ENCODE measurements at regions of chr1 and their contacts with region 1.

Region 1: DNA sequence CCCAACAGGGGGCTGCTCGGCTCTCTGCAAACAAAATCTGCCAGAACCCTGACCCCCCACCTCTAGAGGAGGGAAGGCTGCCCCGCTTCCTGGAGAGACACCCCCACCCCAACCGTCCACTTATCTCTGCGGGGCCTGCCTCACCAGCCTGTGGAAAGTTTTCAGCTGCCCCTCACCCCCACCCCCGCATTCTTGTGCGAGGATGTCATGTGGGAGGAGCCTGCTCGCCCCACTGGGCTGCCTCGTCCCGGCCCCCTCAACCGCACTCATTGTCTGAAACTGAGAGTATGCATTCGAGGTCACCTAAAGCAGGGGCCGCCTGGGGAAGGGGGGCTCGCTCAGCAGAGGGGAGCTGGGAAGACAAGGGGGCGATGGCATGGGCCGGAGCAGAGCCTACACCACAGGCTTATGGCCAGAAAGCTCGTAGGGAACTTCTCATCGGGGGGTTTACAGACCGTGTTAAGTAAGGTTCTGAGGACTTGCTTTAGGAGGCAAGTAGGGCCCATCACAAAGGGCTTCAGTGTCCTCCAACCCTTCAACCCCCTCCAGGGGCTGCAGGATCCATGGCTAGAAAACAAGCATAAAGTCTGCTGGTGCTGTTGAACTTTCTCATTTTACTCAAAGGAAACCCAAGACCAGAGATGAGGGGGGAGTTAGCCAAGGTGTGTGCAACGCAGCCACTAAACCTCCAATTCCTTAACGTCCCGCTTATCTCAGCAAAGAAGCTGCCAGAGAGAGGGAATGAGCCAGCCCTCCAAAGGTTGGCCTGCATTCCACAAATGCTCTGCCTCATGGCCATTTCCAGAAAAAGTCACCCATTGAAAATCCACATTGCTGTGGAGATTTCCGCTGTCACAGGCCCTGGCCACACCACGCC is 9.4 kb downstream of the EPHA2 start:
- DNase-seq: no peak
- ATAC-seq: no peak
- H3K4me3 ChIP-seq: no peak overlapping the region
- H3K4me3 Mint-ChIP-seq: no peak overlapping the region
- H3K27ac ChIP-seq: no peak overlapping the region
- H3K27ac Mint-ChIP-seq: no peak overlapping the region
- H3K4me1 ChIP-seq: peaks cover 14% of the 10 kb centered on the region
- H3K4me1 Mint-ChIP-seq: peaks cover 3% of the 10 kb centered on the region
- H3K27me3 ChIP-seq: peaks cover 2 to 3% of the 10 kb centered on the region in 2 experiments
- H3K27me3 Mint-ChIP-seq: peaks cover 8% of the 10 kb centered on the region
- CTCF ChIP-seq: no peak

Region 2: GRCh38 chr1:14923727-14924452 is 1222.6 kb before region 1 on chr1:
- CTCF ChIA-PET with region 1: no interaction called
- POLR2A ChIA-PET with region 1: no interaction called
- intact Hi-C with region 1: loop called in 1 of 2 experiments (anchors 10 kb)
- DNase-seq: peak in 6 of 9 experiments; percentile 4 to 60 (median 26)
- ATAC-seq: peak; percentile 72
- H3K4me3 ChIP-seq: no peak overlapping the region
- H3K4me3 Mint-ChIP-seq: peak overlapping the region; percentile 76
- H3K27ac ChIP-seq: no peak overlapping the region
- H3K27ac Mint-ChIP-seq: no peak overlapping the region
- H3K4me1 ChIP-seq: peaks cover 6% of the 10 kb centered on the region
- H3K4me1 Mint-ChIP-seq: peaks cover 8% of the 10 kb centered on the region
- H3K27me3 ChIP-seq: peaks cover 10% of the 10 kb centered on the region in 2 experiments
- H3K27me3 Mint-ChIP-seq: peaks cover 36% of the 10 kb centered on the region
- CTCF ChIP-seq: no peak

Region 3: GRCh38 chr1:16116002-16116401 is 30.5 kb before region 1 on chr1:
- CTCF ChIA-PET with region 1: no interaction called
- POLR2A ChIA-PET with region 1: no interaction called
- intact Hi-C with region 1: no loop called
- DNase-seq: no peak
- ATAC-seq: no peak
- H3K4me3 ChIP-seq: no peak overlapping the region
- H3K4me3 Mint-ChIP-seq: no peak overlapping the region
- H3K27ac ChIP-seq: no peak overlapping the region
- H3K27ac Mint-ChIP-seq: no peak overlapping the region
- H3K4me1 ChIP-seq: no peaks in the 10 kb centered on the region
- H3K4me1 Mint-ChIP-seq: no peaks in the 10 kb centered on the region
- H3K27me3 ChIP-seq: no peaks in the 10 kb centered on the region
- H3K27me3 Mint-ChIP-seq: peaks cover 5% of the 10 kb centered on the region
- CTCF ChIP-seq: no peak

Region 4: GRCh38 chr1:16181887-16182719 is 35.6 kb after region 1 on chr1:
- CTCF ChIA-PET with region 1: no interaction called
- POLR2A ChIA-PET with region 1: no interaction called
- intact Hi-C with region 1: loop called in 1 of 2 experiments (anchors 5 kb)
- DNase-seq: no peak
- ATAC-seq: no peak
- H3K4me3 ChIP-seq: no peak overlapping the region
- H3K4me3 Mint-ChIP-seq: no peak overlapping the region
- H3K27ac ChIP-seq: no peak overlapping the region
- H3K27ac Mint-ChIP-seq: no peak overlapping the region
- H3K4me1 ChIP-seq: no peaks in the 10 kb centered on the region
- H3K4me1 Mint-ChIP-seq: no peaks in the 10 kb centered on the region
- H3K27me3 ChIP-seq: no peaks in the 10 kb centered on the region
- H3K27me3 Mint-ChIP-seq: peaks cover 2% of the 10 kb centered on the region
- CTCF ChIP-seq: no peak

Measured in CD8-positive, alpha-beta T cell (primary cell).